Activated B cell treated with CpG ODN at 0.5 μM for 24 hours (primary cell): ENCODE measurements at regions of chr1 and their contacts with region 1.

Region 1: GRCh38 chr1:86419277-86419903 is 4.6 kb upstream of the CLCA2 start:
- DNase-seq: no peak
- ATAC-seq: peak; percentile 81
- H3K4me3 Mint-ChIP-seq: peak overlapping the region; percentile 80
- H3K27ac Mint-ChIP-seq: peak overlapping the region; percentile 70
- H3K4me1 Mint-ChIP-seq: peaks cover 7% of the 10 kb centered on the region
- H3K27me3 Mint-ChIP-seq: peaks cover 3% of the 10 kb centered on the region
- CTCF ChIP-seq: no peak

Region 2: DNA sequence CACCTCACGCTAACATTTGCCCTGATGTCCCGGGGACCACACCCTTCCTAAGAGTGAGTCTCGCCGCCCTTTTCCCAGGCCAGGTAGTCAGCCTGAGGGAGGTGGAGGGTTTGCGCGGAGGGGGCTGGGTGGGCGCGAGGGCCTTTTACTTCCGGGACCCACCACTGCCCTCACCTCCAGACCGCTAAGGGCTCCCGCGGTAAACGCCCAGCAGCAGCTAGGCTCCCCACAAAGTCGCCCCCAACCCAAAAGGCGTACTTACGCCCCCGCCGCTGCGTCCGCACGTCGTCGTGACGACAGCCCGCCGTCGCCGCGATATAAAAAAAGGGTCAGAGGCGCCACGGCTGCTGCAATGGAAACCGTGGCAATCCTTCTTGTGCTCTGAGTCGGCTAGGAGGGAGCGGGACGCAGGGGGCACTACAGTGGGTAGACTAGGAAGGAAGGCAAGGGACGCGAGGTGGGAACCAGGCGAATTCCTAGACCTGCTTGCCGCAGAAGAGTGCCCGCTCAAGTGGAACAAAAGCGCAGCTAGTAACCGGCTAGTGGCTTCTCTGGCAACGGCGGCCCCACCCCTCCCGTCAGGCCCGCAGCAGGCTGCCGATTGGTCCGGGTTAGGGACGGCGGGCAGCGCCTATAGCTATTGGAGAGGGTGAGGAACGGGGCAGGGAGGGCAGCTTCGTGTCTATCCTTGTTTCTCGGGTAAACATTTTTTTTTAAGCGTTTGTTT is 23.5 kb before region 1 on chr1 and contains the start of gene ODF2L:
- CTCF ChIA-PET with region 1: no interaction called
- POLR2A ChIA-PET with region 1: no interaction called
- intact Hi-C with region 1: loop called (anchors 2 kb)
- DNase-seq: peak; percentile 78
- ATAC-seq: peak; percentile 99
- H3K4me3 Mint-ChIP-seq: peak within 1 kb of the TSS; percentile 98
- H3K27ac Mint-ChIP-seq: peak within 1 kb of the TSS; percentile 95
- H3K4me1 Mint-ChIP-seq: peaks cover 45% of the 10 kb centered on the region
- H3K27me3 Mint-ChIP-seq: no peaks in the 10 kb centered on the region
- CTCF ChIP-seq: no peak
- total RNA-seq, gene ODF2L: 28.2 and 36.1 TPM in 2 replicates

Region 3: GRCh38 chr1:86436041-86436440 is 16.7 kb after region 1 on chr1:
- CTCF ChIA-PET with region 1: no interaction called
- POLR2A ChIA-PET with region 1: no interaction called
- intact Hi-C with region 1: no loop called
- DNase-seq: no peak
- ATAC-seq: no peak
- H3K4me3 Mint-ChIP-seq: no peak overlapping the region
- H3K27ac Mint-ChIP-seq: no peak overlapping the region
- H3K4me1 Mint-ChIP-seq: no peaks in the 10 kb centered on the region
- H3K27me3 Mint-ChIP-seq: peaks cover 6% of the 10 kb centered on the region
- CTCF ChIP-seq: no peak

Region 4: GRCh38 chr1:87523466-87523865 is 1104.1 kb after region 1 on chr1:
- CTCF ChIA-PET with region 1: no interaction called
- POLR2A ChIA-PET with region 1: no interaction called
- intact Hi-C with region 1: no loop called
- DNase-seq: no peak
- ATAC-seq: no peak
- H3K4me3 Mint-ChIP-seq: no peak overlapping the region
- H3K27ac Mint-ChIP-seq: no peak overlapping the region
- H3K4me1 Mint-ChIP-seq: peaks cover 2% of the 10 kb centered on the region
- H3K27me3 Mint-ChIP-seq: peaks cover 3% of the 10 kb centered on the region
- CTCF ChIP-seq: no peak